A673 (cell line): ENCODE measurements at regions of chr5 and their contacts with region 1.

Region 1: GRCh38 chr5:16934123-16934522 is 2.0 kb downstream of the MYO10 start:
- DNase-seq: peak; percentile 93
- H3K4me3 ChIP-seq: peak overlapping the region; percentile 90
- H3K27ac ChIP-seq: peak overlapping the region; percentile 95
- H3K4me1 ChIP-seq: peaks cover 62% of the 10 kb centered on the region
- H3K27me3 ChIP-seq: no peaks in the 10 kb centered on the region
- CTCF ChIP-seq: peak; percentile 89

Region 2: GRCh38 chr5:16690243-16690852 is 243.8 kb before region 1 on chr5:
- CTCF ChIA-PET with region 1: no interaction called
- POLR2A ChIA-PET with region 1: no interaction called
- intact Hi-C with region 1: loop called (anchors 10 kb)
- DNase-seq: peak; percentile 80
- H3K4me3 ChIP-seq: no peak overlapping the region
- H3K27ac ChIP-seq: no peak overlapping the region
- H3K4me1 ChIP-seq: peaks cover 9% of the 10 kb centered on the region
- H3K27me3 ChIP-seq: no peaks in the 10 kb centered on the region
- CTCF ChIP-seq: peak; percentile 82

Region 3: DNA sequence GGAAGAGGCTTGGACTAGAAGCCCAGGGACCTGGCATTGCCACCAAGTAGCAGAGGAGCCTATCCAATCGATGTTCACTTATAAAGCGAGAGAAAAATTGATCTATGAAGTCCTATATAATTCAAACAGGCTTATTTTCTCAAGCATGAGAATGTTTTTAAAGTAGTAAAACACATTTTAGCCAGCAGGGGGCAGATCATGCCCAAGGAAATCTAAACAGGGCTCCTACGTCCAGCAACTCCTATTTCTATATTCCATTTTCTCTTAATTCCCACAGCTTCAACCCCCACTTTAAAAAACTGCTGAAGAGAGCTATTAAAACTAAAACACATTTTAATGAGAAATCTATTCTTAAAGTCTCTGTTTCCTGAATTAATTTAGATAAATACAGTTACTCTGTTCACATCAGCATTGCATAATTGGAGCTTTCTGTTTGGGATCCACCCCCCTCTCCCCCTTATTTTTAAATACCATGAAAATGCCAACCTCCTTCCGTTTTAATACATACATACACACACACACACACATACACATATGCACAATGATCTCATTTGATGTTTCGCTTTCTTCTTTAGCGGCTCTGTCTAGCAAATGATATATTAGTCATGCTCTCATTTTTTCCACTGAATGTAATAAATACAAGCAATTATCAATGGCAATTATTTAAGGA is 143.0 kb before region 1 on chr5:
- CTCF ChIA-PET with region 1: interaction called, 9 read pairs
- POLR2A ChIA-PET with region 1: no interaction called
- intact Hi-C with region 1: loop called (anchors 2 kb)
- DNase-seq: peak; percentile 94
- H3K4me3 ChIP-seq: no peak overlapping the region
- H3K27ac ChIP-seq: peak overlapping the region; percentile 65
- H3K4me1 ChIP-seq: peaks cover 70% of the 10 kb centered on the region
- H3K27me3 ChIP-seq: no peaks in the 10 kb centered on the region
- CTCF ChIP-seq: peak; percentile 74